ENCODE measurements at regions of chr1 and their contacts with region 1.

Region 1: GRCh38 chr1:118266436-118266835 is 81.4 kb upstream of the SPAG17 start:
- DNase-seq: no peak
- H3K4me3 ChIP-seq: no peak overlapping the region
- H3K27ac ChIP-seq: no peak overlapping the region
- H3K4me1 ChIP-seq: no peaks in the 10 kb centered on the region
- H3K27me3 ChIP-seq: no peaks in the 10 kb centered on the region
- CTCF ChIP-seq: no peak

Region 2: DNA sequence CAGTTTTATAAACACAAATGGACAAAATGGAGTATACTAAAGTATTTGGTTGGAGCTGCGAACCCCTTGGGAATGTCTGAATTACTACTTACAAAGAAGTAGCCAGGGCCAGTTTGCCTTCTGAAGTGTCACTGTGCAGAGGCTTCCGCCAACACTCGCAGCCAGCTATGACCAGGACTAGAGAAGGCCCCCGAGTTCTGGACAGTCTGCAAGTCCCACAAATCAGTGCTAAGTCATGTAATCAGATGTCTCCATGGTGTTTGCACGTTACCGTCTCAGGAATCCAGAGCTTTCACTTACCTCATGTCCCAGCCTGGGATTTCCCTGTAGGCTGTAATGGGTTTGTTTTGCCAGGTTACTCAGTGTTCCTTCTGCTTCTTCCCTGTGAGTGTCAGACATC is 25.2 kb after region 1 on chr1:
- CTCF ChIA-PET with region 1: no interaction called
- POLR2A ChIA-PET with region 1: no interaction called
- intact Hi-C with region 1: loop called (anchors 1 kb)
- DNase-seq: no peak
- H3K4me3 ChIP-seq: no peak overlapping the region
- H3K27ac ChIP-seq: no peak overlapping the region
- H3K4me1 ChIP-seq: peaks cover 5% of the 10 kb centered on the region
- H3K27me3 ChIP-seq: no peaks in the 10 kb centered on the region
- CTCF ChIP-seq: no peak

Region 3: GRCh38 chr1:118304722-118305359 is 38.4 kb after region 1 on chr1:
- CTCF ChIA-PET with region 1: no interaction called
- POLR2A ChIA-PET with region 1: no interaction called
- intact Hi-C with region 1: no loop called
- DNase-seq: peak; percentile 45
- H3K4me3 ChIP-seq: no peak overlapping the region
- H3K27ac ChIP-seq: no peak overlapping the region
- H3K4me1 ChIP-seq: no peaks in the 10 kb centered on the region
- H3K27me3 ChIP-seq: no peaks in the 10 kb centered on the region
- CTCF ChIP-seq: peak; percentile 63

Region 4: DNA sequence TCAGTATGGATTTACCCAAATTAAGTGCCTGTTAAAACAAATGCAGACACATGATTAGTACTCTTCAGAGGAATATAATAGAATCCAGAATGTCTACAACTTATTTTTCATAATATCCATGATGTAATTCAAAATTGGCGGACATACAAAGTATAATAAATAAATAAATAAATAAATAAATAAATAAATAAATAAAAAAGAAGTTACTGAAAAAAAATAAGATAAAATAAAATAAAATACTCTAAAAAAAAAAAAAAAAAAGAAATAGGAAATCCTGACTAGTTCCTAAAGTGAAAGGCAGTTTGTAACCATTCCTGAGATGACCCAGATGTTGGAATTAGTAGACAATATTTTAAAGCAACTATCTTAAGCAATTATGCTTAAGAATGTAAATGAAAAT is 137.6 kb after region 1 on chr1:
- CTCF ChIA-PET with region 1: no interaction called
- POLR2A ChIA-PET with region 1: no interaction called
- intact Hi-C with region 1: no loop called
- DNase-seq: no peak
- H3K4me3 ChIP-seq: no peak overlapping the region
- H3K27ac ChIP-seq: no peak overlapping the region
- H3K4me1 ChIP-seq: no peaks in the 10 kb centered on the region
- H3K27me3 ChIP-seq: no peaks in the 10 kb centered on the region
- CTCF ChIP-seq: no peak